ENCODE measurements at regions of chr3 and their contacts with region 1.

Region 1: DNA sequence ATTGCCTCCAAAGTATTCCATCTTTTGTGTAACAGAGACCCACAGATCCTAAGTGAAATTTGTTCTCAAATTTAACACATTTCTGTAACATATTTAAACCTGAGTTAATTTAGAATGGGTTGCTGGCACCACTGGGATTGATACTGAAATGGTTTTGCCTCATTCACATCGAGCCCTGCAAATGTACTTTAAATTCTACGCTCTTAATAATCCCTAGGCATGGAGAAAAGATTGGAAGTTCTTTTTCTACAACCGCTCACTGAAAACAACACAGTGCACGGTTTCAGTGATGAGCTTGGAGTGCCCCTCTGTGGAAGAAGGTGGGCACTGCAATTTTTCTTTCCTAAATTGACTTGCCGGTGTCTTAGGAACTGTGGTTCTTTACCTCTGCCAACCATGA is 109.9 kb upstream of the ATP11B start:
- DNase-seq: peak; percentile 90
- H3K4me3 Mint-ChIP-seq: peak overlapping the region; percentile 58
- H3K27ac Mint-ChIP-seq: no peak overlapping the region
- H3K4me1 Mint-ChIP-seq: peaks cover 9% of the 10 kb centered on the region
- H3K27me3 Mint-ChIP-seq: peaks cover 52% of the 10 kb centered on the region

Region 2: GRCh38 chr3:181326637-181327223 is 1356.7 kb before region 1 on chr3:
- intact Hi-C with region 1: loop called (anchors 1 kb)
- DNase-seq: peak; percentile 58
- H3K4me3 Mint-ChIP-seq: no peak overlapping the region
- H3K27ac Mint-ChIP-seq: no peak overlapping the region
- H3K4me1 Mint-ChIP-seq: no peaks in the 10 kb centered on the region
- H3K27me3 Mint-ChIP-seq: no peaks in the 10 kb centered on the region

Region 3: GRCh38 chr3:181700168-181701087 is 983.0 kb before region 1 on chr3:
- intact Hi-C with region 1: loop called (anchors 2 kb)
- DNase-seq: peak; percentile 88
- H3K4me3 Mint-ChIP-seq: peak overlapping the region; percentile 79
- H3K27ac Mint-ChIP-seq: peak overlapping the region; percentile 58
- H3K4me1 Mint-ChIP-seq: peaks cover 20% of the 10 kb centered on the region
- H3K27me3 Mint-ChIP-seq: peaks cover 88% of the 10 kb centered on the region

Region 4: DNA sequence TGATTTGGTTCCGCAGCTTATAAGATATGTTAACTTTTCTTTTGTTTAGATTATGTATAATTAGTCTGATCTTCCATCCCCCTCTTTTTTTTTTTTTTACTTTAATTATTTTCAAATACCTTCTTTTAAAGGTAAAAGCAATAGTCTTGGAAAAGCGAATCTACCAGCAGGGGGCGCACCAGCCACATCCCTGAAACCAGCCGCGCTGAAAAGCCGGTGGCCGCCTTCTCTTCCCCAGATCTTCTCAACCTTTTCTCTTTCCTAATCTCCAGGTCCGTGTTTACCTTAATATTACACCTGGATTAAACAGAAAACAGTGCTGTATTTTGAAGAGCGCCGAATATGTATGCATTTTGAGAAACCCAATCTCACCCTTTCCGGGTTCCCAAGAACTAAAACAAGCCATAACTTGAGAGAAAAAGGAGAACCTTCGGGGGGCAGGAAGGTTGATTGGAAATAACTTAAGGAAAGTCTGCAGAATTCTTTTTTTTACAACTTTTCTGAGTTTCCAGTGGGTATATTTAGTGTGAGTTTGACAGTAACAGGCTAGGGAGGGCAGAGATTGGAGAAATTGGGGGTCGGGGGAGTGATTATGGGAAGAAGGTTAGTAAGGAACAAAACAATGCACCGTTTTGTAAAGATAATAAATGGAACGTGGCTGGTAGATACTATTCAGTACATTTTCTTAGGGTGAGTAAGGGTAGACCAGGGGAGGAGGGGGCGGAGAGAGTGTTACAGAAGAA is 973.7 kb before region 1 on chr3:
- intact Hi-C with region 1: loop called (anchors 1 kb)
- DNase-seq: peak; percentile 89
- H3K4me3 Mint-ChIP-seq: peak overlapping the region; percentile 27
- H3K27ac Mint-ChIP-seq: peak overlapping the region; percentile 72
- H3K4me1 Mint-ChIP-seq: peaks cover 7% of the 10 kb centered on the region
- H3K27me3 Mint-ChIP-seq: peaks cover 61% of the 10 kb centered on the region

Region 5: DNA sequence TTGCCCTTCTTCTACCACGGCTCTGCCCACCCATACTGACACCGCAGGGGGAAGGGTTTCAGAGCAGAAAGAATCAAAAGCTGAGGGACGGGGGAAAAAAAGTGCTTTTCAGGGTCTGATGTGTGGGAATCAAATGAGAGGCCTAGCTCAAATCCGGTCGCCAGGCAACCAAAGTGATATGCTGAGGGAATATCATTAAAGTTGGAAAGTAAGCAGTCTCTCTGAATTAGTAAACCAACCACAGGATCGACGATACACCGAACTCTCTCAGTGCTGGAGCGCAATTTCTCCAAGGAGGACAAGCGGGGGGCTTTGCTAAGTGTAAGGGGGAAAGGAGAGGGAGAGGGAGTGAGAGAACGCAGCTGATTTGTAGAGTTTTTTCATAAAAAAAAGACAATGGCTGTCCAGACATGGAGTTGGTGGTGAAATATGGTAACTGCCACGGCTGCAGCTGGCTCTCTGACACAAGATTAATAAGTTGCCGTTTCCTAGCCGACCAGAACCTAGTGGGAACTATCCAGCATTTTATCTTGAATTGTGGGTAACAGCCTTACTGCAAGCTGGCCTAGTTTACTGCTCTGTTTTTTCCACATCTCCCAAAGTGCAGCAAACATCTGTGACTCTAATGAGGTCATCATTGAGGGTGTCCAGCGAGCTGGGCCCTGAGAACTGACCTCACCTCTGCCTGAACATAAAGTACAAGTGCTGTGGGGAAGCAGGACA is 441.5 kb before region 1 on chr3:
- intact Hi-C with region 1: loop called (anchors 10 kb)
- DNase-seq: no peak
- H3K4me3 Mint-ChIP-seq: no peak overlapping the region
- H3K27ac Mint-ChIP-seq: no peak overlapping the region
- H3K4me1 Mint-ChIP-seq: no peaks in the 10 kb centered on the region
- H3K27me3 Mint-ChIP-seq: no peaks in the 10 kb centered on the region

Measured in activated CD4-positive, alpha-beta T cell treated with anti-CD3 and anti-CD28 coated beads, Interleukin-2, amount 10 ng/mL, durations not matched to agents 24 days and 14 days (primary cell).